HCT116 (cell line): ENCODE measurements at regions of chr7 and their contacts with region 1.

Region 1: GRCh38 chr7:35593896-35594295 is 101.0 kb downstream of the HERPUD2 start:
- DNase-seq: peak; percentile 12
- ATAC-seq: peak; percentile 79
- H3K4me3 ChIP-seq: no peak overlapping the region
- H3K27ac ChIP-seq: no peak overlapping the region
- H3K4me1 ChIP-seq: peaks cover 5 to 9% of the 10 kb centered on the region in 2 experiments; a peak in 3 of 4 replicates
- H3K27me3 ChIP-seq: no peaks in the 10 kb centered on the region
- CTCF ChIP-seq: peak; percentile 13 to 78 (median 67); a peak in 4 of 6 replicates
- POLR2A ChIP-seq: no peak
- RAD21 ChIP-seq: peak; percentile 9; the same call in 1 of the 2 replicates

Region 2: DNA sequence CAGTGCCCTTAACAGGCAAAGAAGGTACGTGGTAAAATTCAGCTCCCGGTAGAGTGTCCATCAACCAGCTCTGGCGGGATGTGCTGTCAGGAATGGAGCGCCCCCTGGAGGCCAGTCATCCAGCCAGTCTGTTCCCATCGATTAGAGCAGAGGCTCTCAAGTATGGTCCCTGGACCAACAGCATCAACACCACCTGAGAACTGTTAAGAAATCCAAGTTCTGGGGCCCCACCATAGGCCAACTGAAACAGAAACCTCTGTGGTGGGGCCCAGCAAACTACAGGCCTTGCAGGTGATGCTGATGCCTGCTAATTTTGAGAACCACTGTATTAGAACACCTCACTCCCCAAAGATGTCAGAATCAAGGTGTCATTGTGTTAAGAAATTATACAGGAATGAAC is 665.8 kb before region 1 on chr7:
- CTCF ChIA-PET with region 1: no interaction called
- POLR2A ChIA-PET with region 1: no interaction called
- RAD21 ChIA-PET with region 1: no interaction called
- intact Hi-C with region 1: no loop called
- DNase-seq: peak; percentile 31
- ATAC-seq: peak; percentile 92
- H3K4me3 ChIP-seq: no peak overlapping the region
- H3K27ac ChIP-seq: no peak overlapping the region
- H3K4me1 ChIP-seq: no peaks in the 10 kb centered on the region
- H3K27me3 ChIP-seq: no peaks in the 10 kb centered on the region
- CTCF ChIP-seq: peak; percentile 33 to 85 (median 71); a peak in 5 of 6 replicates
- POLR2A ChIP-seq: no peak
- RAD21 ChIP-seq: peak; percentile 67

Region 3: GRCh38 chr7:35578536-35578935 is 15.4 kb before region 1 on chr7:
- CTCF ChIA-PET with region 1: interaction called, 10 read pairs
- POLR2A ChIA-PET with region 1: no interaction called
- RAD21 ChIA-PET with region 1: no interaction called
- intact Hi-C with region 1: no loop called
- DNase-seq: no peak
- ATAC-seq: no peak
- H3K4me3 ChIP-seq: no peak overlapping the region
- H3K27ac ChIP-seq: no peak overlapping the region
- H3K4me1 ChIP-seq: no peaks in the 10 kb centered on the region
- H3K27me3 ChIP-seq: no peaks in the 10 kb centered on the region
- CTCF ChIP-seq: no peak
- POLR2A ChIP-seq: no peak
- RAD21 ChIP-seq: no peak